ENCODE measurements at regions of chr17 and their contacts with region 1.

Region 1: DNA sequence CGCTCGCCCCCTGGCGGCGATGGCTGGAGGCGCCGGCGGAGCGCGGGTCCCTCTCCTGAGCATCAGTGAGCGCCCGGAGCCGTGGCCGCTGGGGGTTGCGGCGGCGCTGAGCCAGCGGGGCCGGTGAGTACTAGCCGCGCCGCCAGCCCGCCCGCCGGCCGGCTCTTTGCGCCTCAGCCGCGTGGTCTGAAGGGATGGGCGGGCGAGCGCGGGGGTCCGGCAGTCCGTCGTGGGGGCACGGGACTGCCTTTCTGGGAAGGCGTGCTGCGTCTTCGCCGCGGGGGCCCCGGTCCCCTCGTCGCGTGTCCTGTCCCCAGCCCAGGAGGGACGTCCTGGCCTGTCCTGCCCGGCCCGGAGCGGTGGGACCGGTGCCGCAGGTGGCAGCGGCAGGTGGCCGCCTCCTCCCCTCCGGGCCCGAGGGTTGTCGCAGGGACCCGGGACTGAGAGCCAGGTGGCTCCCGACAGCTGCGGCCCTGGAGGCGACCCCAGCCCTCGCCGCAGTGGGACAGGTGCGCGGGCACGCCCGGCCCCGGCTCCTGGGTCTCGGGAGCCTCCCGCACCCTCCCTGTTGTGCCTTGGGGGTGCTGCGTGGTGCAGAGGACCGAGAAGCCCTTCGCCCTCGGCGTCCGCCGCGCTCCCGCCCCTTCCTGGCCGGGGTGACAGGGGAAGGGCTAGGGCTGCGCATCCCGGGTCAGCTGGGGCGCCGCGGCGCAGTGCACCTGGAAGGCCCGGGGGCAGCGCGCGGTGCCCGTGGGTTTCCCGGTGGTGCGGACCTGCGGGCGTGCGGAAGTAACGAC is at the start of gene SPECC1:
- DNase-seq: peak; percentile 66 to 94
- H3K4me3 ChIP-seq: peak within 1 kb of the TSS; percentile 80
- H3K27ac ChIP-seq: no peak within 1 kb of the TSS
- H3K4me1 ChIP-seq: peaks cover 16% of the 10 kb centered on the region
- H3K27me3 ChIP-seq: no peaks in the 10 kb centered on the region
- CTCF ChIP-seq: no peak; the same call in 1 of the 2 replicates
- total RNA-seq, gene SPECC1: 128 and 152 TPM in 2 replicates

Region 2: GRCh38 chr17:19992803-19993713 is 16.4 kb before region 1 on chr17:
- CTCF ChIA-PET with region 1: interaction called, 22 read pairs
- POLR2A ChIA-PET with region 1: no interaction called
- intact Hi-C with region 1: no loop called
- DNase-seq: peak; percentile 87 to 92
- H3K4me3 ChIP-seq: peak overlapping the region; percentile 42; the same call in 1 of the 2 replicates
- H3K27ac ChIP-seq: peak overlapping the region; percentile 16; the same call in 1 of the 2 replicates
- H3K4me1 ChIP-seq: no peaks in the 10 kb centered on the region
- H3K27me3 ChIP-seq: no peaks in the 10 kb centered on the region
- CTCF ChIP-seq: peak; percentile 88

Region 3: GRCh38 chr17:20028443-20028842 is 18.9 kb after region 1 on chr17:
- CTCF ChIA-PET with region 1: no interaction called
- POLR2A ChIA-PET with region 1: no interaction called
- intact Hi-C with region 1: no loop called
- DNase-seq: peak in 1 of 2 experiments; percentile 48
- H3K4me3 ChIP-seq: no peak overlapping the region
- H3K27ac ChIP-seq: no peak overlapping the region
- H3K4me1 ChIP-seq: peaks cover 28% of the 10 kb centered on the region
- H3K27me3 ChIP-seq: no peaks in the 10 kb centered on the region
- CTCF ChIP-seq: no peak

Region 4: DNA sequence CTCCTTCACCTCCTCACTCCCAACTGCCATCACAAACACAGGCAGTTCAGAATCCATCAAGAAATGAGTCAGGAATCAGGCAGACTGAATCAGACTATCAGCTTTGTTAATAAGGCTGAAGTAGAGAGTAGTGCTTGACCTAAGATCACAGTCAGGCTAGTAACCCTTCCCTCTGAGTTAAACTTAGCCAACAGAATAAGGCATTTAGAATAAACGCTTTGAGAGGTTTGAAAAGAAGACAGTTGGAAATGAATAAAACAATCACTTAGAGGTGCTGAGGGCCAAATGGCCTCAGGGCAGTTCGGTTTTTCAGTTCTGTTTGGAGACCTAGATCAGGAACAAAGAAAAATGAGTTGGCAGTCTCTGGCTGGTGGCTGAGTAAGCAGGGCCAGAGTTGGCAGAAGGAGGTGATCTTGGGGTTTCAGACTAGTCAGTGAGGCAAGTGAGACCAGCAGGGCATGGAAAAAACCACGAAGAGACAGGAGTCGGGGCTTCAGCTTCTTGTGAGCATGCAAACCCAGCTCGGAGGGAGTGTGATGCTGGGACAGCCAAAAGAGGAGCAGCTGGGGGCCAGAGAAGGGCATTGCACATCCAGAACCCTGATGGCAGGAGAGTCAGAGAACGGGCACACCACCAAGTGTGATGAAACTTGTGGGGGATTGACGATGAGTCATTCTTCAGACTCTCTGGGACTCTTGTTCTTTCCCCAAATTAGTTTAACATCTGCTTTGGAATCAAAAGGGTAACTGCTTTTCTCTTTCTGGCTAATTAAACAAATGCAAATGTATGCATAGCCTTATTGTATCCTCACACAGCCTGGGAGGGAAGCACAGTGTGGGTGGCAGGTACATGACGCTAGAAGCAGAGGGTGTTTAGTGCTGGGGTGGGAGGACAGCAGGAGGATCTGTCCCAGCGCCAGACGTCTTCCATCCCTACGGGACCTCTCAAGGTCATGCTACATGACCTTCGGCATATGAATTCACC is 54.5 kb after region 1 on chr17:
- CTCF ChIA-PET with region 1: interaction called, 7 read pairs
- POLR2A ChIA-PET with region 1: interaction called, 10 read pairs
- intact Hi-C with region 1: loop called (anchors 1 kb)
- DNase-seq: peak; percentile 81 to 83
- H3K4me3 ChIP-seq: peak overlapping the region; percentile 19; the same call in 1 of the 2 replicates
- H3K27ac ChIP-seq: peak overlapping the region; percentile 87
- H3K4me1 ChIP-seq: peaks cover 85% of the 10 kb centered on the region
- H3K27me3 ChIP-seq: no peaks in the 10 kb centered on the region
- CTCF ChIP-seq: no peak

Region 5: DNA sequence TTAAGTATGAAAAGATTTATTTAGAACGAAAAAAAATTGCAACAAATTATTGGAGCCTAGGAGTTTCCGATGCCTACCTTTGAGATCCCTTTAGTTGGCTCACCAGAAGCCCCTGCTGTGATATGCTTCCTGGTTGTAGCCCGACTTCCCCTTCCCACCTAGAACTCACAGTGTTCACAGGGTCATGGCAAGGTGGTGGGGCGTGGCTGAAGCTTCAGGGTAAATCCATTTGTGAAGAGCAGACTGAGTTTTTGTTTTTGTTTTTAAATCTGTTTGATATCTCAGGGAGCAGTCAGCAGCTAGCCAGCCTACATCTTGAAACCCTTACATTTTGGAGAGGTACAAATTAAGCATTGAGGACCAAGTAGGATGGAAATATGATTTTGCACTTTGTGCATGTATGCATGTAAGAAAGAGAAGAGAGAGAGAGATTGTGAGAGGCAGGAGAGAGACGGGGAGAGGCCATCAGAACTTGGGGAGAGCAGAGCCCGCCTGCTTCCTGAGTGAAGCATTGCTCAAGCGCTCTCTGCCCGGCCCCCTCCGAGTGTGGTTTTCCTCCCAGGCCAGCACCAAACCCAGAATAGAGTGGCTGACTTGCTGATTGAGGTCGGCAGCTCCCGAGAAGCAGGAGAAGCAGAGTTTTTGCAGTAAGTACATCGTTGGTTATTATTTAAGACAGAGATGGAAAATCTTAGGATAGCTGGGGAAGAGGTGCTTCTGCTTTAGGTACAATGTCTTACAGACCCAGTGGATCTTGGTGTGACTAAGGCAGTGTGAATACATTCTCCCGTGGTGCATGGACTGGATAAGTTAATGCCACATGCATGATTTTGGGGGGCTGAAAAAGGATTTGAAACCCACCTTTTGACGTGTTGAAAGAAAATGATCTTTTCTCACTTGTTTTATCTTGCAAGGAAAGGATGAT is 63.8 kb after region 1 on chr17:
- CTCF ChIA-PET with region 1: interaction called, 16 read pairs
- POLR2A ChIA-PET with region 1: no interaction called
- intact Hi-C with region 1: no loop called
- DNase-seq: no peak
- H3K4me3 ChIP-seq: no peak overlapping the region
- H3K27ac ChIP-seq: no peak overlapping the region
- H3K4me1 ChIP-seq: no peaks in the 10 kb centered on the region
- H3K27me3 ChIP-seq: no peaks in the 10 kb centered on the region
- CTCF ChIP-seq: no peak

Region 6: GRCh38 chr17:20086412-20087076 is 77.0 kb after region 1 on chr17:
- CTCF ChIA-PET with region 1: interaction called, 7 read pairs
- POLR2A ChIA-PET with region 1: interaction called, 3 read pairs
- intact Hi-C with region 1: loop called (anchors 2 kb)
- DNase-seq: peak; percentile 43 to 73
- H3K4me3 ChIP-seq: no peak overlapping the region
- H3K27ac ChIP-seq: no peak overlapping the region
- H3K4me1 ChIP-seq: 0 out of 2 replicates have a peak, but pooled peaks cover 5% of the 10 kb centered on the region
- H3K27me3 ChIP-seq: no peaks in the 10 kb centered on the region
- CTCF ChIP-seq: no peak

Region 7: GRCh38 chr17:20095336-20096080 is 86.0 kb after region 1 on chr17:
- CTCF ChIA-PET with region 1: interaction called, 3 read pairs
- POLR2A ChIA-PET with region 1: interaction called, 3 read pairs
- intact Hi-C with region 1: loop called (anchors 2 kb)
- DNase-seq: peak in 1 of 2 experiments; percentile 19
- H3K4me3 ChIP-seq: no peak overlapping the region
- H3K27ac ChIP-seq: no peak overlapping the region
- H3K4me1 ChIP-seq: no peaks in the 10 kb centered on the region
- H3K27me3 ChIP-seq: no peaks in the 10 kb centered on the region
- CTCF ChIP-seq: no peak

Region 8: DNA sequence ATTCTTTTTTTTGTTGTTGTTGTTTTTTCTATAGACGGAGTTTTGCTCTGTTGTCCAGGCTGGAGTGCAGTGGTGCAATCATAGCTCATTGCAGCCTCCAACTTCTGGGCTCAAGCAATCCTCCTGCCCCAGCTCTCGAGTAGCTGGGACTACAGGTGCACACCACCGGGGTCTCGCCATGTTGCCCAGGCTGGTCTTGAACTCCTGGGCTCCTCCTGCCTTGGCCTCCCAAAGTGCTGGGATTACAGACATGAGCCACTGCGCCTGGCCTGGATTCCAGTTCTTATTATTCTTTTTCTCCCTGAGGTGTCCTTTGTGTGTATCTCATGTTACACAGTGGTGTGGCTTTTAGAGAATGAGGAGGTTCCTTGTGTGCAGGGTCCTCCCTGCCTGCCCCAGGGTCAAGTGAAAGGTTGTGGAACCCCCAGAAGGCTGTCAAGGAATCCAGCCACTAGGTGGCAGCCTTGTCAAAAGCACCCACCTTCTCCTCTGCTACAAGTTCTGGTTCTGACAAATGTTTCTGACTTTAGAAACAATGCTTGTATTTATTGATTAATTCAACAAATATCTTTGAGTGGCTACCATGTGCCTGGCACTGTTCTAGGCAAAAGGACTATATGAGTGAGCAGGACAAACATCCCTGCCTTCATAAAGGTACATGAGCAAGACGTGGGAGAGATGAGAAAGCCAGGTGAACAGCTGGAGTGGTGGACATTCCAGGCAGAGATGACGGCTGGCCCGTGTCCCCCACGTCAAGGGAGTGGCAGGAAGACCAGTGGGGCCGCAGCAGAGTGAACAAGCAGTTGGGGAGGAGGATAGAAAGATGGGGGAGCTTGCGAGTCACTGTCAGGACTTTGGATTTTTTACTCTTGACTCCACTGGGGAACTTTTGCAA is 112.1 kb after region 1 on chr17:
- CTCF ChIA-PET with region 1: interaction called, 4 read pairs
- POLR2A ChIA-PET with region 1: no interaction called
- intact Hi-C with region 1: loop called (anchors 1 kb)
- DNase-seq: peak in 1 of 2 experiments; percentile 70
- H3K4me3 ChIP-seq: no peak overlapping the region
- H3K27ac ChIP-seq: no peak overlapping the region
- H3K4me1 ChIP-seq: no peaks in the 10 kb centered on the region
- H3K27me3 ChIP-seq: no peaks in the 10 kb centered on the region
- CTCF ChIP-seq: peak; percentile 98

Measured in PC-9 (cell line).